Lower leg skin (tissue), 4 donors: ENCODE measurements at regions of chr18 and their contacts with region 1.

Region 1: GRCh38 chr18:21955757-21956652 is 213.4 kb upstream of the GATA6 start:
- DNase-seq: peak; percentile 56 to 93
- H3K4me3 ChIP-seq: no peak overlapping the region
- CTCF ChIP-seq: no peak
- POLR2A ChIP-seq: no peak

Region 2: GRCh38 chr18:21191596-21192307 is 764.3 kb before region 1 on chr18:
- intact Hi-C with region 1: loop called (anchors 10 kb)
- DNase-seq: peak in 1 of 2 donors; percentile 24
- H3K4me3 ChIP-seq: no peak overlapping the region
- CTCF ChIP-seq: no peak
- POLR2A ChIP-seq: no peak

Region 3: GRCh38 chr18:21489919-21490495 is 466.0 kb before region 1 on chr18:
- intact Hi-C with region 1: loop called (anchors 10 kb)
- DNase-seq: peak in 1 of 2 donors; percentile 69
- H3K4me3 ChIP-seq: no peak overlapping the region
- CTCF ChIP-seq: no peak
- POLR2A ChIP-seq: no peak

Region 4: GRCh38 chr18:21636769-21637168 is 319.2 kb before region 1 on chr18:
- intact Hi-C with region 1: no loop called
- DNase-seq: no peak
- H3K4me3 ChIP-seq: no peak overlapping the region
- CTCF ChIP-seq: no peak
- POLR2A ChIP-seq: no peak

Region 5: DNA sequence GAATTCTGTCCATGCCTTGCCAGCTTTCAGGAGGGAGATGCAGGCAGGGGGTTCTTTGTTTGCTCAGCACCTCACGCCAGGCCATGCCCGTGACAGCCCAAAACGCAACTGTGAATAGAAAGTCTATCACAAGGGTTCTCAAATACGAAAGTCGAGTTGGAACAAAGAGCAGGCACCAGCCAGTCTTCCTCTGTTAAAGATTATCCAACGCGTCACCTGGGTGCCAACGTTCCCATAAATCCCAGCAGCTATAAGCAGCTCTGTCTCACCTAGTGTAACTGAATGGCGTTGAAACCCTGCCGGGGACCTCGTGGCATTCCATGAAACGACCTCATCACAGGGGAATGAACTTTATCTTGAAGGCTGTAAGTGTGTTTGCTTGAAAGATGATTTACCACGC is 128.5 kb after region 1 on chr18:
- intact Hi-C with region 1: no loop called
- DNase-seq: peak in 1 of 2 donors; percentile 36
- H3K4me3 ChIP-seq: no peak overlapping the region
- CTCF ChIP-seq: no peak
- POLR2A ChIP-seq: no peak